ENCODE measurements at regions of chr7 and their contacts with region 1.

Region 1: DNA sequence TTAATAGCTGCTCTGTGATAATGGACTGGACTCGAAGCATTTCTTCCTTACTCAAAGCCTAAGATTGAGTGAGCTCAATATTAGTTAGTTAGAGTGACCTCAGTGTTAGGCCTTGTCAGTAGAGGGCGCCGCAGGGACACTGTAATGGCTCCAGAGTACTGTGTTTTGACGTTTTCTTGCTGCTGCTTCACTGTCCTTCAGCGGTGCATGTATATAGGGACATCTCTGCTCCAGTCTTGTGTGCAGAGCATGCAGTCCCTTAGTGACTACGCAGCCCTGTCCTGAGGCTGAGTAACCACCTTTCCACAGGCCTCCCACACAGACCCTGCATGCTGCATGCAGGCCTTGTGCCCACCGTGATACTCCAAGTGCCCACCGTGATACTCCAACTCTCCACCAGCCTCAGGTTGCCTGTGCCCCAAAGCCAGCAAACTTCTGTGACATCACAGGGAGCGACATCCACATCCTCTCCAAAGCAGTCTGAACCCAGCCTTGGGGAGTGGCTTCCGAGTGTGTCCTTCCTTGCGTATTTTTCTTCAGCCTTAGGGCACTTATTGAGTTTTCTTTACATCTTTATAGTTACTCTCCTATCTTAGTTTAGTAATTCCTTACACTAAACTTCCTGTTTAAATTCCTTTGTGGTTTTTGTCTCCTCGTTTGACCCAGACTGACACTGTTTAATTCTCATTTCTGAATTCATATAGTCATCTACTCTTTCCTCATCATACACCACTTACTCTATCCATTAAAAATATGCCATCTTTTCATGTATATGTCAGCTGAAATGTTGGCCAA is 118.2 kb downstream of the JAZF1 start:
- DNase-seq: no peak
- H3K4me3 ChIP-seq: no peak overlapping the region
- CTCF ChIP-seq: peak; percentile 64

Region 2: DNA sequence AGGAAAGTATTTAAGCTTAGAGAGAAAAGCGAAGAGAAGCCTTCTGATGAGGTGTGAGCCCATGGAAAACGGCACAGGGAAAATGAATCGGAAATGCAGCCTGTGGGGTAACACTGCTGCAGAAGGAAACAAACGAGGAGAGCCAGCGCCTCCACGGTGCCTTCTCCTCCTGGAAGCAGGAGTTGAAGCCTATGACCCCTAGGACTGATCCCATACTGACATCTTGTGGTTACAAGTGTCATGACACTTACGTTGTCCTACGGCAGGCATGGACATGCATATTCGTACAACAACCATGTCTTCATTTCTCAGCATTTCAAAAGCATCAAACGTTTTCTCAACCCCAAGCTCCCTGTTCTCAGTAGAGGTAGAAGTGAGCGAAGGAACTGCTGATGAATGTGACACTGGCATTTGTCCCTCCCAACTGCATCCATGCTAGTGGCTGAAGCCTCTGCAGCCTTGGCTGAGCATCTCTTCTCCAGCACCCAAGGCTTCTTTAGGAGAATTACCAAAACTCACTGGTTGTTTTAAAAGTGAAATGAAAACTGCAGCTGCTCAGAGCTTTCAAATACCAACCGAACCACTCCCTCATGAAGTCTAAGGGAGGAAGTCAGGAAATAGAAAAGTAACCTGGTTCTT is 42.0 kb before region 1 on chr7:
- CTCF ChIA-PET with region 1: interaction called, 11 read pairs
- POLR2A ChIA-PET with region 1: no interaction called
- DNase-seq: no peak
- H3K4me3 ChIP-seq: no peak overlapping the region
- CTCF ChIP-seq: peak; percentile 80

Region 3: GRCh38 chr7:28078036-28078901 is 15.9 kb after region 1 on chr7:
- CTCF ChIA-PET with region 1: interaction called, 258 read pairs
- POLR2A ChIA-PET with region 1: no interaction called
- DNase-seq: no peak
- H3K4me3 ChIP-seq: no peak overlapping the region
- CTCF ChIP-seq: peak; percentile 86

Region 4: GRCh38 chr7:28228396-28228795 is 166.0 kb after region 1 on chr7:
- CTCF ChIA-PET with region 1: no interaction called
- POLR2A ChIA-PET with region 1: no interaction called
- DNase-seq: no peak
- H3K4me3 ChIP-seq: no peak overlapping the region
- CTCF ChIP-seq: no peak

Region 5: DNA sequence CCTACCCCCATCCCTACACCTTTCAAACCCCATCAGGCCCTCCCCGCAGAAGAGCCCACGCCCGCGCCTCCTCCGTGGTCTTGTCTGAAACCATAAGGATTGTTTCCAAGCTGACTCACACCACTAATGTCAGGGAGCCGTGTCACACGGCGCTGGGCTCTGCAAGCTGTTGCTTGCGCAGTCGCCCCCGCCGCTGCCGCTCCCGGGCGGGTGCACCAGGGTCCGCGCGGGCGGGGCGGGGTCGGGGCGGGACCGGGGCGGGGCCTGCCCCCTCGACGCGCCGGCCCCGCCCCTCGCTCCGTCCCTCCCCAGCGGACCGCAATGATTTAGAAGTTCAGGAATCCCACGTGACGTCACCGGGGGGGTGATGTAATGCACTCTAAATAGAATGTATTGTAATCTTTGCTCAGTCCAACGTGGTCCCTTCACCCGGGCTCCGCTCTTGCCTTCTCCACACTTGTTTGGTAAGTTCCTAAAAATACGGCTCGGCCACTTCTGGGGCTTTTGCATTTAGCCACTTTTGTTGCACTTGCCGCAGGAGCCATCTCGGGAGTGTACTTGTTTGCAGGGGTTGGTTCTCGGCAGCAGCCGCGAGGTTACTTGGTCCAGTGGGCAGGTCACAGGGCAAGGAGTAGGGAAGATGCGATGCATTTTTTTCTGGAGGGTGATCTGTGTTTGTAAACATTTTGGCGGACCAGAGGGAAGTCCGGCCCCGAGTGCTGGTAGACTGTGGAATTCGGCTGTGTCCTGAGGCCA is 346.7 kb after region 1 on chr7:
- CTCF ChIA-PET with region 1: no interaction called
- POLR2A ChIA-PET with region 1: no interaction called
- DNase-seq: peak; percentile 74
- H3K4me3 ChIP-seq: peak overlapping the region; percentile 67
- CTCF ChIP-seq: no peak

Measured in AG04449 (cell line).